ENCODE measurements at regions of chr2 and their contacts with region 1.

Region 1: GRCh38 chr2:163132850-163133249 is 294.3 kb upstream of the KCNH7 start:
- DNase-seq: peak; percentile 60

Region 2: GRCh38 chr2:162817919-162818318 is 314.9 kb before region 1 on chr2:
- in situ Hi-C with region 1: no loop called
- DNase-seq: no peak

Region 3: GRCh38 chr2:162890690-162891311 is 242.0 kb before region 1 on chr2:
- in situ Hi-C with region 1: loop called (anchors 25 kb)
- DNase-seq: peak; percentile 78

Region 4: DNA sequence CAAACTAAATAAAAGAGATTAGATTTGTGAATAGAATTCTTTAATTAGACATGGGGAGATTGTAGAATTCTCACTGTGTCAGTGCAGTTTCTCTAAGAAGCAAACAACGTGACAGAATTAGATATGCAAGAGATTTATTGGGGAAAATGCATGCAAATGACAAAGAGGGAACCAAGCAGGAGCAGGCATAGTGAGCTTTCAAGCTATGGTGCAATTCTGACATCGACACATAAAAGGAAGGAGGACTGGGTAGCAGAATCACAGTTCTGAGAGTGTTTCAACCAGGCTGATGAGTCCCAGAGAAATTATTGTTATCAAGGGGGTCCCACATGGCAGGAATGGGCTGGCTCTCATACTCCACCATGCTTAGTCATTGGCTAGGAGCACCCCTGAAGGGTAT is 264.6 kb after region 1 on chr2:
- in situ Hi-C with region 1: no loop called
- DNase-seq: no peak

Region 5: GRCh38 chr2:163441603-163442002 is 308.8 kb after region 1 on chr2:
- in situ Hi-C with region 1: no loop called
- DNase-seq: no peak

Measured in ACHN (cell line).